MCF 10A (cell line): ENCODE measurements at regions of chr10 and their contacts with region 1.

Region 1: GRCh38 chr10:89029785-89030437 is 39.3 kb downstream of the FAS start:
- DNase-seq: peak; percentile 81
- H3K4me3 Mint-ChIP-seq: no peak overlapping the region
- H3K27ac Mint-ChIP-seq: no peak overlapping the region
- H3K4me1 Mint-ChIP-seq: peaks cover 30% of the 10 kb centered on the region
- H3K27me3 Mint-ChIP-seq: no peaks in the 10 kb centered on the region
- CTCF ChIP-seq: peak; percentile 79

Region 2: DNA sequence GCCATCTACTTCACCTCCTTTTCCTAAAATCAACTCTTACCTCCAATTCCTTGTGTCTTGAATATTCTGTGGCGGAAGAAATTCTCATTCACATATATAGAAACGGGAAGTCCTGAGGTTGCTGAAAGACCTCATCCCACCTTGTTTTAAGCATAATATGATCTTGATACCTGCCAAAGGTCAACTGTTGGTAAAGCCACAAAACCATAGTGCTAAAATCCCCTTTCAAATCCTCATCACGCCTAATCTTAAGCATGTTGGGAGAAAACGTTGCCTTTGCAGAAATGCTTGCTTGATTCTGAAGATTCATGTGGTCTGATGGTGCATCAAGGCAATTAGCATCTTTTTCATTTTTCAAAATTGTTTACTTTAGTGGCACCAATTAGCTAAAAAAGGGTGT is 186.7 kb before region 1 on chr10:
- CTCF ChIA-PET with region 1: no interaction called
- POLR2A ChIA-PET with region 1: no interaction called
- intact Hi-C with region 1: no loop called
- DNase-seq: no peak
- H3K4me3 Mint-ChIP-seq: no peak overlapping the region
- H3K27ac Mint-ChIP-seq: no peak overlapping the region
- H3K4me1 Mint-ChIP-seq: peaks cover 5% of the 10 kb centered on the region
- H3K27me3 Mint-ChIP-seq: no peaks in the 10 kb centered on the region
- CTCF ChIP-seq: no peak

Region 3: DNA sequence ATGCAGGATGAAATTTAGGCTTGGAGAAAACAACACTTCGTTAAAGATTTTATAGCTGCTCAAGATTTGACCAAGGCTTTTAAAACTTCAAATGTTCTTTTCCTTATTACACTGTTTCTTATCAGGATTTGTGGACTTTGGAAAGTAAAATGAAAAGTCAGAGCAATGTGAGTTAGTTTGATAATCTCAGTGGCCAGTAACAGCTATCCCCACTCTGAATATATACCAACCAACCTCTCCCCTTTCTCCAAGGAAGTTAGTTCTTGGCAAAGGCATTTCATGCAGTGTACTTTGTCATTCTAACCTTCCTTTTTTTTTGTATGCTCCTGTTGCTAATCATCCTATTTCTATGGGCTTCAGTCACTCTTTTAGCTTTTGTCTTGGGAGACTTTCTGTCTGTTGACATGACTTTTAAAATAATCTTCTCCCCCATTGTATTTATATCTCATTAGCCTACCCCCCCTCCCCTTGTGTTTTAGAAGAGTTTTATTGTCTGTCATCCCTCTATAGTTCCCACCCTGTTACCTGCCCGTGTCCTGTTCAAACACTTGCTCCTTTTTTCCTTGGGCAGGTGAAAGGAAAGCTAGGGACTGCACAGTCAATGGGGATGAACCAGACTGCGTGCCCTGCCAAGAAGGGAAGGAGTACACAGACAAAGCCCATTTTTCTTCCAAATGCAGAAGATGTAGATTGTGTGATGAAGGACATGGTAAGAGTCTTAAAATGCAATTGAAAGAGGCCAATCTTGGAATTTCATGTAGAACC is 22.6 kb before region 1 on chr10:
- CTCF ChIA-PET with region 1: interaction called, 15 read pairs
- POLR2A ChIA-PET with region 1: no interaction called
- intact Hi-C with region 1: no loop called
- DNase-seq: no peak
- H3K4me3 Mint-ChIP-seq: no peak overlapping the region
- H3K27ac Mint-ChIP-seq: peak overlapping the region; percentile 32
- H3K4me1 Mint-ChIP-seq: no peaks in the 10 kb centered on the region
- H3K27me3 Mint-ChIP-seq: no peaks in the 10 kb centered on the region
- CTCF ChIP-seq: no peak

Region 4: GRCh38 chr10:89042562-89042961 is 12.7 kb after region 1 on chr10:
- CTCF ChIA-PET with region 1: interaction called, 10 read pairs
- POLR2A ChIA-PET with region 1: interaction called, 9 read pairs
- intact Hi-C with region 1: no loop called
- DNase-seq: peak; percentile 90
- H3K4me3 Mint-ChIP-seq: no peak overlapping the region
- H3K27ac Mint-ChIP-seq: peak overlapping the region; percentile 55
- H3K4me1 Mint-ChIP-seq: peaks cover 19% of the 10 kb centered on the region
- H3K27me3 Mint-ChIP-seq: no peaks in the 10 kb centered on the region
- CTCF ChIP-seq: no peak

Region 5: GRCh38 chr10:89053555-89053954 is 23.6 kb after region 1 on chr10:
- CTCF ChIA-PET with region 1: no interaction called
- POLR2A ChIA-PET with region 1: no interaction called
- intact Hi-C with region 1: no loop called
- DNase-seq: no peak
- H3K4me3 Mint-ChIP-seq: no peak overlapping the region
- H3K27ac Mint-ChIP-seq: no peak overlapping the region
- H3K4me1 Mint-ChIP-seq: no peaks in the 10 kb centered on the region
- H3K27me3 Mint-ChIP-seq: no peaks in the 10 kb centered on the region
- CTCF ChIP-seq: no peak

Region 6: GRCh38 chr10:89163265-89163995 is 133.5 kb after region 1 on chr10:
- CTCF ChIA-PET with region 1: interaction called, 4 read pairs
- POLR2A ChIA-PET with region 1: interaction called, 15 read pairs
- intact Hi-C with region 1: no loop called
- DNase-seq: peak; percentile 84
- H3K4me3 Mint-ChIP-seq: peak overlapping the region; percentile 29
- H3K27ac Mint-ChIP-seq: no peak overlapping the region
- H3K4me1 Mint-ChIP-seq: peaks cover 30% of the 10 kb centered on the region
- H3K27me3 Mint-ChIP-seq: no peaks in the 10 kb centered on the region
- CTCF ChIP-seq: no peak

Region 7: GRCh38 chr10:89207181-89207800 is 177.4 kb after region 1 on chr10 and contains the start of gene CH25H:
- CTCF ChIA-PET with region 1: interaction called, 31 read pairs
- POLR2A ChIA-PET with region 1: interaction called, 13 read pairs
- intact Hi-C with region 1: no loop called
- DNase-seq: peak; percentile 69
- H3K4me3 Mint-ChIP-seq: peak within 1 kb of the TSS; percentile 62
- H3K27ac Mint-ChIP-seq: no peak within 1 kb of the TSS
- H3K4me1 Mint-ChIP-seq: peaks cover 6% of the 10 kb centered on the region
- H3K27me3 Mint-ChIP-seq: no peaks in the 10 kb centered on the region
- CTCF ChIP-seq: no peak
- total RNA-seq, gene CH25H: not detected in 2 replicates